ENCODE measurements at regions of chr11 and their contacts with region 1.

Region 1: GRCh38 chr11:6362873-6363678 is 27.2 kb upstream of the SMPD1 start:
- DNase-seq: peak; percentile 33
- H3K4me3 ChIP-seq: no peak overlapping the region
- CTCF ChIP-seq: peak; percentile 97

Region 2: DNA sequence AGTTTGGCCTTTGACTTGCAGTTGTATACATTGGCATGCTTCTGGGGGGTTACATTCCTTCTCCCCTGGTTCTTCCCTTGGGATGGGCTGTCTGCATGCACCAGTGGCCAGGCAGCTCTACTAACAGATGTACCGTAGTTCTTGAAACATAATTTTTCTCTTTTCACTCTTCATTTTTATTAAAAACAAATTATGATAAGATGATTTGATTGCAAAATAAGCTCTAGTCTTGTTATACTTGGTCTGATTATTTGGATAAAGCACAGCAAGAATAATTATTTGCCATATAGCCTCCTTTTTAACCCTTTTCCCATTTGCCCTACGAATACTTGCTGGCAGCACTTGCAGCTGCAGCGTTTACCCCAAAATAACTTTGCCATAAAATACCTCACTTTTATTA is 407.5 kb before region 1 on chr11:
- CTCF ChIA-PET with region 1: no interaction called
- POLR2A ChIA-PET with region 1: no interaction called
- DNase-seq: no peak
- H3K4me3 ChIP-seq: no peak overlapping the region
- CTCF ChIP-seq: no peak

Region 3: GRCh38 chr11:6022956-6023355 is 340.1 kb before region 1 on chr11:
- CTCF ChIA-PET with region 1: interaction called, 108 read pairs
- POLR2A ChIA-PET with region 1: no interaction called
- DNase-seq: peak; percentile 3
- H3K4me3 ChIP-seq: no peak overlapping the region
- CTCF ChIP-seq: peak; percentile 10

Region 4: GRCh38 chr11:6251120-6251733 is 111.8 kb before region 1 on chr11:
- CTCF ChIA-PET with region 1: interaction called, 494 read pairs
- POLR2A ChIA-PET with region 1: interaction called, 4 read pairs
- DNase-seq: no peak
- H3K4me3 ChIP-seq: no peak overlapping the region
- CTCF ChIP-seq: peak; percentile 94

Region 5: GRCh38 chr11:6307876-6308275 is 55.2 kb before region 1 on chr11:
- CTCF ChIA-PET with region 1: interaction called, 20 read pairs
- POLR2A ChIA-PET with region 1: no interaction called
- DNase-seq: no peak
- H3K4me3 ChIP-seq: no peak overlapping the region
- CTCF ChIP-seq: no peak

Region 6: GRCh38 chr11:6333112-6333511 is 30.0 kb before region 1 on chr11:
- CTCF ChIA-PET with region 1: interaction called, 17 read pairs
- POLR2A ChIA-PET with region 1: no interaction called
- DNase-seq: no peak
- H3K4me3 ChIP-seq: no peak overlapping the region
- CTCF ChIP-seq: no peak

Region 7: DNA sequence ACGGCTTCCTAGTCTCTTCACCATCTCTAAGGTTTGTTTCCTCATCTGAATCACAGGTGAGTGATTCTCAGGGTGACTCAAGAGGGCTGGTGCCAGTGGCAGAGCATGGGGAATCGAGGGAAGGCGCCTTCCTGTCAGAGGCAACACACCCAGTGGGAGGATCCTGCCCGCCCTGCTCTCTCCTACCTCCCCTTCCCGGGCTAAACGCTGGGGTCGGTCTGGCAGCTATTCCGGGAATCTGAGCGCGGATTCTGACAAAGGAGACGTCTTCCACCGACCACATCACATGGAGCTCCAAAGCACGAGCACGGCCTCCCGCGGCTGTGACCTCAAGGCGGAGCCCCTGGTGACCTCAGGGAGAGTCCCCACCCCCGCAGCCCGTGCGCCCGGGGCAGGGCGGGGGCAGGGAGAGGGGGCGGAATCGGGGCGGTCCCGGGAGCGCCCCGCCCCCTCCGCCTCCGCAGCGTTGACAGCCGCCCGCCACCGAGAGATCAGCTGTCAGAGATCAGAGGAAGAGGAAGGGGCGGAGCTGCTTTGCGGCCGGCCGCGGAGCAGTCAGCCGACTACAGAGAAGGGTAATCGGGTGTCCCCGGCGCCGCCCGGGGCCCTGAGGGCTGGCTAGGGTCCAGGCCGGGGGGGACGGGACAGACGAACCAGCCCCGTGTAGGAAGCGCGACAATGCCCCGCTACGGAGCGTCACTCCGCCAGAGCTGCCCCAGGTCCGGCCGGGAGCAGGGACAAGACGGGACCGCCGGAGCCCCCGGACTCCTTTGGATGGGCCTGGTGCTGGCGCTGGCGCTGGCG is 27.0 kb after region 1 on chr11 and contains the start of gene SMPD1:
- CTCF ChIA-PET with region 1: interaction called, 16 read pairs
- POLR2A ChIA-PET with region 1: no interaction called
- DNase-seq: peak; percentile 14
- H3K4me3 ChIP-seq: peak within 1 kb of the TSS; percentile 81
- CTCF ChIP-seq: no peak

Region 8: GRCh38 chr11:6531267-6531752 is 168.2 kb after region 1 on chr11:
- CTCF ChIA-PET with region 1: no interaction called
- POLR2A ChIA-PET with region 1: no interaction called
- DNase-seq: no peak
- H3K4me3 ChIP-seq: no peak overlapping the region
- CTCF ChIP-seq: peak; percentile 52